ENCODE measurements at regions of chr16 and their contacts with region 1.

Region 1: DNA sequence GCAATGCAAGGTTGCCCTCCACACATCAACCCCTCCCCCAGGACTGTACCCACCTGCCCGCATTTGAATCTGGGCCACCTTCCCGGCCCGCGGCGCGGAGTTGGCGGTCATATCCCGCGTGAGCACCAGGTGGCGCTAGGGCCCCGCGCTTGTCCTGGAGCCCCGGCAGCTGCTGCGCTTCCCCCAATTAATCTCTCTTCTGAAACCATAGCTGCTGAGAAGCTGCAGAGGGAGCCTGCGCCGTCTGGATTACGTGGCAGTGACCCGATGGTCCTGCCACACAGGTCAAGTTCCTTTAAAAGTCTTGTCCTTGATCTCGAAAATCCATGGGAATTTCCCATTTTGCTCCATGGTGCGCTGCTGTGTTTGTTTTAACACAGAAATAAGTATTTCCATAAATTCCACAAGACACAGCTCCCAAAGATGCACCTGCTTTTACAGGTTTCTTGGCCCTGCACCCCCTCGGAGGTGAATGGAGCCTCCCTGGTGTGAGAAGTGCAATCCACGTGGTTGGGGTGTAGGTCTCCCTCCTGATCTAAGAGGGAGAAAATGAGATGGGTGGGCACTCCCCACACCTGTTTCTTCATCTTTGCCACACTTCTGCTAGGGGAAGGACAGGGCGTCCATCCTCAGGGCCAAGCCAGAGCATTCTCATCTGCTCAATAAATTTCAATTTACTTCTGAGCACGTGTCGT is 22.1 kb downstream of the COX4I1 start:
- DNase-seq: peak; percentile 44 to 67
- H3K4me3 ChIP-seq: no peak overlapping the region
- H3K27ac ChIP-seq: no peak overlapping the region
- H3K4me1 ChIP-seq: no peaks in the 10 kb centered on the region
- H3K27me3 ChIP-seq: no peaks in the 10 kb centered on the region
- CTCF ChIP-seq: peak; percentile 89 to 97 (median 94)
- POLR2A ChIP-seq: no peak

Region 2: DNA sequence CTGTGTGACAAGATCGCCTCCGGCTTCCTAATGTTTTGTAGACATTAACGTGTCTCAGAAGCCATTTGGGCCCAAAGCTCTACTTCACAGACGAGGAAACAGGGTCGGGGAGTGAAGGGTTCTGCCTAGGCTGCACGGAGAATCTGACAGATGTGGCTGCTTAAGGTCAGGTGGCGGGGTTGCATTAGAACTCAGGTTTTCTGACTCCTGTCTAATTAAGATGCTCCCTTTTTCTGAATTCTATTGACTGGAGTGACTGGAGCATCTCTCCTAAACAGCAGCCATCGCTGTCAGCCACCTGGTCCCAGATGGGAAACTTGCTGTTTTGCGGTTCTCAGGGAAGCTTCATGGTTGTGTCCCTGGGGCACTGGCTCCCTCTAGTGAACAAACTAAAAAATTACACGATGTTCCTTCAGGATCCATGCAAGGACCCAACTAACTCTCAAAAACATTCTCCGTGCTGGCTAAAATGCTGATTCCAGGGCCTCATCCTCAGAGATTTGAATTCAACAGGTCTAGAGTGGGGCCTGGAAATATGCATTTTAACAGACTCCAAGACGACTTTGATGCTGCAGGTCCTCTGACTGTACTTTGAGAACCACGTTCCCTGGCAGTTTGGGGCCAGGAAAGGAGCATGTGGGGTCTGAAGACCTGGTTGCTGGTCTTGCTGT is 194.7 kb after region 1 on chr16:
- intact Hi-C with region 1: loop called (anchors 5 kb)
- DNase-seq: no peak
- H3K4me3 ChIP-seq: no peak overlapping the region
- H3K27ac ChIP-seq: no peak overlapping the region
- H3K4me1 ChIP-seq: no peaks in the 10 kb centered on the region
- H3K27me3 ChIP-seq: no peaks in the 10 kb centered on the region
- CTCF ChIP-seq: peak; percentile 52 to 72 (median 66)
- POLR2A ChIP-seq: no peak